MCF 10A (cell line): ENCODE measurements at regions of chr15 and their contacts with region 1.

Region 1: GRCh38 chr15:75347222-75347878 is 511 bp downstream of the NEIL1 start:
- DNase-seq: peak; percentile 36
- H3K4me3 Mint-ChIP-seq: peak overlapping the region; percentile 86
- H3K27ac Mint-ChIP-seq: peak overlapping the region; percentile 74
- H3K4me1 Mint-ChIP-seq: peaks cover 5% of the 10 kb centered on the region
- H3K27me3 Mint-ChIP-seq: no peaks in the 10 kb centered on the region
- CTCF ChIP-seq: no peak

Region 2: GRCh38 chr15:75335705-75336355 is 11.5 kb before region 1 on chr15 and contains the start of gene COMMD4:
- CTCF ChIA-PET with region 1: no interaction called
- POLR2A ChIA-PET with region 1: interaction called, 15 read pairs
- intact Hi-C with region 1: no loop called
- DNase-seq: peak; percentile 94
- H3K4me3 Mint-ChIP-seq: peak within 1 kb of the TSS; percentile 92
- H3K27ac Mint-ChIP-seq: peak within 1 kb of the TSS; percentile 98
- H3K4me1 Mint-ChIP-seq: peaks cover 9% of the 10 kb centered on the region
- H3K27me3 Mint-ChIP-seq: no peaks in the 10 kb centered on the region
- CTCF ChIP-seq: no peak
- total RNA-seq, gene COMMD4: 43.9 and 47.3 TPM in 2 replicates

Region 3: DNA sequence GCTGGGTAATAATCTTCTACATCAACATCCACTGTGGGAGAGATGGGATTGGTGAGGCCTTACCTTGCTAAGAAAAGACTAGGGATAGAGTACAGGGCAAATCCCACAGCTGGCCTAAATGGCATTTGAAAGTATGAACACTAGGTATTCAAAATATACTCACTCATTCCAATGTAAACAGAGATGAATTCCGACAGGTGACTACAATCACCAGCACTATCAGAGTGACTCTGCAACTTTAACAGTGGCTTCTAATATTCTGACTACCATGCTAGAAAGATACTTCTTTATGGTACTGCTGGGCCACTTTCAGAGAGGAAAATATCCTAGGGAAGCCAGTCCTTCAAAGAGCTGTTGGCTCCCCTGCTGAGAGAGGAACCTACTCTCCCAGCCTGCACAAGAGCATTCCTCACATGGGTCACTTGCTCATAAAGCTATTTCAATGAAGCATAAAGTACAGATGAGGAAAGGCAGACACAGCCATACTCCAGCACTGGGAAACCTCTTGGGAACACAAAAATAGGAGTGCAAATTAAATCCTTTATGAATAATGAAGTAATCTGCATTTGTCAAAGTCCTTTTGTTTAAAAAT is 42.5 kb after region 1 on chr15:
- CTCF ChIA-PET with region 1: no interaction called
- POLR2A ChIA-PET with region 1: no interaction called
- intact Hi-C with region 1: no loop called
- DNase-seq: no peak
- H3K4me3 Mint-ChIP-seq: no peak overlapping the region
- H3K27ac Mint-ChIP-seq: no peak overlapping the region
- H3K4me1 Mint-ChIP-seq: no peaks in the 10 kb centered on the region
- H3K27me3 Mint-ChIP-seq: no peaks in the 10 kb centered on the region
- CTCF ChIP-seq: no peak